GM12878 (cell line): ENCODE measurements at regions of chr10 and their contacts with region 1.

Region 1: GRCh38 chr10:101889256-101890210 is 45.9 kb upstream of the KCNIP2 start:
- DNase-seq: peak; percentile 66
- ATAC-seq: peak; percentile 93
- H3K4me3 ChIP-seq: 0 out of 2 replicates have a peak overlapping the region, but pooled peaks have one; percentile 29
- H3K27ac ChIP-seq: peak overlapping the region; percentile 67
- H3K4me1 ChIP-seq: peaks cover 22% of the 10 kb centered on the region
- H3K27me3 ChIP-seq: no peaks in the 10 kb centered on the region
- CTCF ChIP-seq: peak; percentile 86 to 93 (median 91)
- EP300 ChIP-seq: no peak
- POLR2A ChIP-seq: no peak
- RAD21 ChIP-seq: peak; percentile 98

Region 2: GRCh38 chr10:101920546-101920945 is 31.0 kb after region 1 on chr10:
- CTCF ChIA-PET with region 1: interaction called, 11 read pairs
- POLR2A ChIA-PET with region 1: interaction called, 9 read pairs
- RAD21 ChIA-PET with region 1: interaction called, 20 read pairs
- SMC1A ChIA-PET with region 1: interaction called, 37 read pairs
- in situ Hi-C with region 1: no loop called
- intact Hi-C with region 1: no loop called
- DNase-seq: no peak
- ATAC-seq: no peak
- H3K4me3 ChIP-seq: no peak overlapping the region
- H3K27ac ChIP-seq: no peak overlapping the region
- H3K4me1 ChIP-seq: peaks cover 3% of the 10 kb centered on the region; the same call in 1 of the 2 replicates
- H3K27me3 ChIP-seq: no peaks in the 10 kb centered on the region
- CTCF ChIP-seq: no peak
- EP300 ChIP-seq: no peak
- POLR2A ChIP-seq: no peak
- RAD21 ChIP-seq: no peak

Region 3: GRCh38 chr10:101974091-101974971 is 84.8 kb after region 1 on chr10:
- CTCF ChIA-PET with region 1: interaction called, 28 read pairs
- POLR2A ChIA-PET with region 1: interaction called, 7 read pairs
- RAD21 ChIA-PET with region 1: interaction called, 60 read pairs
- SMC1A ChIA-PET with region 1: interaction called, 17 read pairs
- in situ Hi-C with region 1: no loop called
- intact Hi-C with region 1: no loop called
- DNase-seq: no peak
- ATAC-seq: no peak
- H3K4me3 ChIP-seq: 0 out of 2 replicates have a peak overlapping the region, but pooled peaks have one; percentile 42
- H3K27ac ChIP-seq: peak overlapping the region; percentile 99
- H3K4me1 ChIP-seq: peaks cover 50% of the 10 kb centered on the region
- H3K27me3 ChIP-seq: no peaks in the 10 kb centered on the region
- CTCF ChIP-seq: no peak
- EP300 ChIP-seq: no peak
- POLR2A ChIP-seq: no peak
- RAD21 ChIP-seq: no peak

Region 4: DNA sequence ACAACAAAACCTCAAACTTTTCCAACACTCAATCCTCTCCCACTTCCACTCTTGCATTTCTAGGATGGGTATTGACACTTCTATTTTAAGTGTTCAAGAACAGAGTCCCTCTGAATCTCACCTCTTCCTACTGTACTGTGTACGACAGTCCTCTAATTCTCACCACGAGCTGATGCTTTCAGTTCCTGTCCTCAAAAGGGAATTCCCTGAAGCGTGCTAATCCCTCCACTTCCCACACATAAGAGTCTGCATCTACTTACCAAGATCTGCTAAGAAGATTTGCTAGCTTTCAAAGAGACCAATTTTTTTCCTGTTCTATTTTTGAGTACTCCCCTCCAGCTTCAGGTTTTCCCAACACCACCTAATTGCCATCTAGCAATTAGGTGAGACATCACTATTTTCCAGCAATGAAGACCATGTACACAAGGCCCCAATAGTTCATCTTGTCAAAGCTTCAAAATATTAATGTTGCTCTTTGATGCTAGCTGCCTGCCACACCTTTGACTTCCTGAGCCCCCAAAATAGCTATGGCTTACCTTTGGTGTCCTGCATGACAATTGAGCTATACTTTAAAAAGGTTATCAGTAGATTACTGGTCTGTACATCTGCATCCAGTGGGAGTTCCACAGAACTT is 112.0 kb after region 1 on chr10:
- CTCF ChIA-PET with region 1: interaction called, 543 read pairs
- POLR2A ChIA-PET with region 1: interaction called, 18 read pairs
- RAD21 ChIA-PET with region 1: interaction called, 467 read pairs
- SMC1A ChIA-PET with region 1: interaction called, 408 read pairs
- in situ Hi-C with region 1: loop called (anchors 5 kb)
- intact Hi-C with region 1: no loop called
- DNase-seq: peak; percentile 95
- ATAC-seq: peak; percentile 84
- H3K4me3 ChIP-seq: peak overlapping the region; percentile 12; the same call in 1 of the 2 replicates
- H3K27ac ChIP-seq: peak overlapping the region; percentile 91
- H3K4me1 ChIP-seq: peaks cover 47% of the 10 kb centered on the region
- H3K27me3 ChIP-seq: no peaks in the 10 kb centered on the region
- CTCF ChIP-seq: no peak
- EP300 ChIP-seq: peak; percentile 93 to 98; a peak in 3 of 4 replicates
- POLR2A ChIP-seq: no peak
- RAD21 ChIP-seq: no peak

Region 5: DNA sequence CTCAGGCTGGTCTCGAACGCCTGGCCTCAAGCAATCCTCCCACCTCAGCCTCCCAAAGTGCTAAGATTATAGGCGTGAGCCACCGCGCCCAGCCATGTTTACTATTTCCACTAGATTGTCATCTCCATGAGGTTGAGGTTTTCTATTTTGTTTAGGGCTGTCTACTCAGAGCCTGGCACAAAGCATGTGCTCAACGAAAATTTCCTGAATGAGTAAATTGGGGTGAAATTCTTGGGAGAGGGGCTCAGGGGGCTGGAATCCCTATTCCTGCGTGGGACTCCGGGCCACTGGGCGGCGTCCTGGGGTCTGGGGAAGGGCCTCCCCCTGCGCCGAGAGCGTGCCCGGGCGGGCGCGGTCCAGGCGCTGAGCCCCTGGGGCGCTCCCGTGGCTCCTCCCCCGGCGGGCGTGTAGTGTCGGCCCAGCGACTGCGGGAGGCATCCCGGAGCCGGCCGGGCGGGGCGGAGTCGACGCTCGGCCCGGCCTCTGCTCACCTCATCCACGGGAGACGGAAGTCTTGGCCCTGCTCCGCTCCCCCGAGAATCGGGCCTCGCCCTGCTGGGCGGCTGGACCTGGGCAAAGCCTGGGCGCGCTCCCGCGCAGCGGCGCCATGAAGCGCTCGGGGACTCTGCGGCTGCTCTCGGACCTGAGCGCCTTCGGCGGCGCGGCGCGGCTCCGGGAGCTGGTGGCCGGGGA is 175.5 kb after region 1 on chr10 and contains the start of gene HPS6:
- CTCF ChIA-PET with region 1: interaction called, 17 read pairs
- POLR2A ChIA-PET with region 1: no interaction called
- RAD21 ChIA-PET with region 1: interaction called, 4 read pairs
- SMC1A ChIA-PET with region 1: interaction called, 4 read pairs
- in situ Hi-C with region 1: no loop called
- intact Hi-C with region 1: no loop called
- DNase-seq: peak; percentile 61
- ATAC-seq: peak; percentile 98
- H3K4me3 ChIP-seq: peak within 1 kb of the TSS; percentile 90
- H3K27ac ChIP-seq: peak within 1 kb of the TSS; percentile 73
- H3K4me1 ChIP-seq: peaks cover 7% of the 10 kb centered on the region
- H3K27me3 ChIP-seq: no peaks in the 10 kb centered on the region
- CTCF ChIP-seq: peak in 2 of 3 experiments; percentile 31 to 35; a peak in 3 of 6 replicates
- EP300 ChIP-seq: no peak
- POLR2A ChIP-seq: peak; percentile 89
- RAD21 ChIP-seq: no peak
- polyA plus RNA-seq, gene HPS6: 1.4 to 2.8 TPM